Caco-2 (cell line): ENCODE measurements at regions of chr1 and their contacts with region 1.

Region 1: GRCh38 chr1:76909311-76909710 is 42.0 kb downstream of the ST6GALNAC5 start:
- DNase-seq: no peak
- H3K4me3 ChIP-seq: no peak overlapping the region
- H3K4me3 Mint-ChIP-seq: no peak overlapping the region
- H3K27ac Mint-ChIP-seq: no peak overlapping the region
- H3K4me1 ChIP-seq: no peaks in the 10 kb centered on the region
- H3K4me1 Mint-ChIP-seq: no peaks in the 10 kb centered on the region
- H3K27me3 ChIP-seq: no peaks in the 10 kb centered on the region
- H3K27me3 Mint-ChIP-seq: peaks cover 16% of the 10 kb centered on the region
- CTCF ChIP-seq: no peak

Region 2: GRCh38 chr1:76989976-76990375 is 80.7 kb after region 1 on chr1:
- CTCF ChIA-PET with region 1: no interaction called
- POLR2A ChIA-PET with region 1: no interaction called
- intact Hi-C with region 1: loop called (anchors 2 kb)
- DNase-seq: no peak
- H3K4me3 ChIP-seq: no peak overlapping the region
- H3K4me3 Mint-ChIP-seq: no peak overlapping the region
- H3K27ac Mint-ChIP-seq: no peak overlapping the region
- H3K4me1 ChIP-seq: no peaks in the 10 kb centered on the region
- H3K4me1 Mint-ChIP-seq: no peaks in the 10 kb centered on the region
- H3K27me3 ChIP-seq: no peaks in the 10 kb centered on the region
- H3K27me3 Mint-ChIP-seq: peaks cover 6% of the 10 kb centered on the region
- CTCF ChIP-seq: no peak